ENCODE measurements at regions of chr5 and their contacts with region 1.

Region 1: DNA sequence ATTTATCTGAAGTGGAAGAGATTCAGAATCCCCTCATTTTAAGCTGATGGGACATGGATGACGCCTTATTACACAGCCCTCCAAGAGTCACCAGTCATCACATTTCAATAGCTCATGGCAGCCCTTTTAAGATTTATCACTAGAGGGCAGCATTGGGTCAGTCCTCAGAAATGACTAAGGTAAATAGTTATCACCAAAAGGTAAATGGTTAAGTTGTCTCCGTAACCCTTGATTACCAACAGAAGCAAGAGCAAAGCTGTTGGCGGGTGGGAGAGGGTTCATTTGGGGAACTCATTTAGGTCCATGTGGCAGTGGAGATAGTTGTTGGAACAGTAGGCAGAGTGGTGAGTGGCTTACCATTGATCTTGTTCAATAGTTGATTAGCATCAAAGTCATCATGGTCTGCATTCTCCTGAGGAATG is 12.0 kb upstream of the C9 start:
- DNase-seq: peak in 8 of 9 donors; percentile 2 to 40 (median 26)
- ATAC-seq: peak; percentile 80
- H3K4me3 ChIP-seq: no peak overlapping the region
- H3K4me3 Mint-ChIP-seq: no peak overlapping the region
- H3K27ac ChIP-seq: no peak overlapping the region
- H3K27ac Mint-ChIP-seq: no peak overlapping the region
- H3K4me1 ChIP-seq: no peaks in the 10 kb centered on the region
- H3K4me1 Mint-ChIP-seq: peaks cover 0 to 5% (median 0%) of the 10 kb centered on the region in 7 donors
- H3K27me3 ChIP-seq: no peaks in the 10 kb centered on the region
- H3K27me3 Mint-ChIP-seq: peaks cover 0 to 32% (median 0%) of the 10 kb centered on the region in 5 donors

Region 2: DNA sequence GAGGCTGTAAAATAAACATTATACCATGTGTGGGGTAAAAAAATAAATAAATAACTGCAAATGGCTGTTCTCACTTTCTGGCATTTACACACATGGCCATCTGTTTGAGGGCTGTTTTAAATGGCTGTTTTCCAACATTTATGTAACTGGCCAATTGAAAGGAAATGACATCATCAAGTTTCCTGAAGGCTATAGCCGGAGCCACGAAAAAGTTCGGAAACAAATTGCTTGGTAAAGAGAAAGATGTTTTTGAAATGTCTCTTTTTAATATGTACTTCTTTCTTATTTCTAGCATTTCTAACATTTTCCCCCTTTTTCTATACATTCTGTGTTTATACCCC is 143.9 kb after region 1 on chr5:
- CTCF ChIA-PET with region 1: no interaction called
- POLR2A ChIA-PET with region 1: no interaction called
- intact Hi-C with region 1: no loop called
- DNase-seq: no peak
- ATAC-seq: no peak
- H3K4me3 ChIP-seq: no peak overlapping the region
- H3K4me3 Mint-ChIP-seq: no peak overlapping the region
- H3K27ac ChIP-seq: no peak overlapping the region
- H3K27ac Mint-ChIP-seq: no peak overlapping the region
- H3K4me1 ChIP-seq: no peaks in the 10 kb centered on the region
- H3K4me1 Mint-ChIP-seq: no peaks in the 10 kb centered on the region
- H3K27me3 ChIP-seq: no peaks in the 10 kb centered on the region
- H3K27me3 Mint-ChIP-seq: peaks cover 7 to 25% (median 16%) of the 10 kb centered on the region in 5 donors

Region 3: GRCh38 chr5:39547553-39548154 is 171.3 kb after region 1 on chr5:
- CTCF ChIA-PET with region 1: interaction called, 10 read pairs
- POLR2A ChIA-PET with region 1: no interaction called
- intact Hi-C with region 1: loop called (anchors 1 kb)
- DNase-seq: peak in 7 of 9 donors; percentile 14 to 49 (median 36)
- ATAC-seq: peak; percentile 50
- H3K4me3 ChIP-seq: no peak overlapping the region
- H3K4me3 Mint-ChIP-seq: peak overlapping the region in 8 of 10 donors; percentile 16 to 67 (median 50)
- H3K27ac ChIP-seq: no peak overlapping the region
- H3K27ac Mint-ChIP-seq: peak overlapping the region in 1 of 9 donors; percentile 55
- H3K4me1 ChIP-seq: no peaks in the 10 kb centered on the region
- H3K4me1 Mint-ChIP-seq: peaks cover 0 to 8% (median 5%) of the 10 kb centered on the region in 7 donors
- H3K27me3 ChIP-seq: no peaks in the 10 kb centered on the region
- H3K27me3 Mint-ChIP-seq: peaks cover 0 to 5% (median 0%) of the 10 kb centered on the region in 5 donors

Region 4: DNA sequence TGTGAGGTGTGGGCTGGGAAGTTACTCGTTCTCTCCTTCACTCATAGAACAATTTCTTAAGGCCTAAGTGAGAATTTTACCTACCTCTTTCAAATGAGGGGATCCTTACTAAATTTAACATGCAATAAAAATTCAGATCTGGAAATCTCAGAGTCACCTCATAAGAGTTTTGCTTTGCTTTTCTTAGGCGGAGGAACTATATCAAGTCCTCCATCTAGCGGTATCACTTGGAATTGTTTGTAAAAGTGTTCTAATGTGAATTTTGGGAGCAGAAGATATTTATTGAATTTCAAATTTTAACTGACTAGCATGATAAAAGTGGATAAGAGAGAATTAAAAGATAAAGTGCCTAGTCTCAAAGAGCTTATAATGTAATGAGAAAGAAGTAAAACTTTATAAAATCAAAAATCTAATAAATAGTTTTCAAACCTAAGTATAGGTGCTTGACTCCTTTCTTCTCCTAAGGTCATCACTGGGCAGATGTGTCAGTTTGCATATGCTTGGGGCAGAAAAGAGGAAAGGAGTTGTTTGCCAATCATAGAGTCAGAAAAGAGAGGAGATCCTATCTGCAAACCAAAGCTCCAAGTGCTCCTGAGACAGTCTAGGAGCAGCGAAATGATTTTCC is 194.2 kb after region 1 on chr5:
- CTCF ChIA-PET with region 1: interaction called, 3 read pairs
- POLR2A ChIA-PET with region 1: no interaction called
- intact Hi-C with region 1: loop called (anchors 1 kb)
- DNase-seq: peak in 5 of 9 donors; percentile 8 to 31 (median 27)
- ATAC-seq: peak; percentile 36
- H3K4me3 ChIP-seq: no peak overlapping the region
- H3K4me3 Mint-ChIP-seq: no peak overlapping the region
- H3K27ac ChIP-seq: no peak overlapping the region
- H3K27ac Mint-ChIP-seq: no peak overlapping the region
- H3K4me1 ChIP-seq: no peaks in the 10 kb centered on the region
- H3K4me1 Mint-ChIP-seq: peaks cover 0 to 3% (median 0%) of the 10 kb centered on the region in 7 donors
- H3K27me3 ChIP-seq: no peaks in the 10 kb centered on the region
- H3K27me3 Mint-ChIP-seq: peaks cover 0 to 29% (median 10%) of the 10 kb centered on the region in 5 donors

Measured in naive thymus-derived CD4-positive, alpha-beta T cell (primary cell).